B cell (primary cell): ENCODE measurements at regions of chr14 and their contacts with region 1.

Region 1: DNA sequence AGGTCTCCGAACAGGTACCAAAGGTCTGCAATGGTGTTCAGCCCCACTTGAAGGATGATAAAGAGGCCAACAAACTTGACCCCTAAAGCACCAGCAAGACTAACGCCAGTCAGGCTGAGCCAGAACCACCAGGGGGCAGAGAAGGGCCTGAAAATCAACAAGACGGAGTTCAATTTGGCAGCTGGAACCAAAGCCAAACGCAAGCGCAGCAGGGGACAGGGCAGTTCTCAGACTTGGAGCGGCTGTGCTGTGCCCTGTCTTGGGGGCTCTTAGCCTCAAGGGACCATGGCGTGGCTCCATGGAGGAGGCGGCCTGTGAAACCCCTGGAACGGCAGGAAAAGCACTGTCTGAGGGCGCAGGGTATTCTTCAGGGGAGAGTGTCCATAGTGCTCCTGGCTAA is 19.6 kb downstream of the POMT2 start:
- DNase-seq: peak; percentile 77
- ATAC-seq: peak; percentile 56
- H3K4me3 ChIP-seq: no peak overlapping the region
- H3K4me3 Mint-ChIP-seq: no peak overlapping the region
- H3K27ac ChIP-seq: no peak overlapping the region
- H3K27ac Mint-ChIP-seq: no peak overlapping the region
- H3K4me1 ChIP-seq: no peaks in the 10 kb centered on the region
- H3K4me1 Mint-ChIP-seq: peaks cover 2% of the 10 kb centered on the region
- H3K27me3 ChIP-seq: no peaks in the 10 kb centered on the region
- H3K27me3 Mint-ChIP-seq: no peaks in the 10 kb centered on the region
- CTCF ChIP-seq: peak; percentile 74

Region 2: DNA sequence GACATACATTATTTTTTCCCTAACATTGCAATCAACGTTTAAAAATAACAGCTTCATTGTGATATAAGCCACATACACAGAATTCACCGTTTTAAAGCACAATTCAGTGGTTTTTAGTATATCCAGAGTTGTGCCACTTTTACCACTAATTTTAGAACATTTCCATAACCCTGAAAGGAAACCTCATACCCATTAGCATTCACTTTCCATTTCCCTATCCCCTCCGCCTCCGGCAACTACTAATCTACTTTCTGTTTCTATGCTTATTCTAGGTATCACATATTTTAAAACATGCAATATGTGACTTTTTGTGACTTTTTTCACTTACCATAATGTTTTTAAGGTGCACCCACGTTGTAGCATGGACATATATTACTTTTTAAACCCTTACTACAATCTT is 253.1 kb after region 1 on chr14:
- CTCF ChIA-PET with region 1: interaction called, 56 read pairs
- POLR2A ChIA-PET with region 1: no interaction called
- intact Hi-C with region 1: loop called (anchors 1 kb)
- DNase-seq: peak; percentile 37
- ATAC-seq: no peak
- H3K4me3 ChIP-seq: no peak overlapping the region
- H3K4me3 Mint-ChIP-seq: no peak overlapping the region
- H3K27ac ChIP-seq: peak overlapping the region; percentile 46 to 73
- H3K27ac Mint-ChIP-seq: no peak overlapping the region
- H3K4me1 ChIP-seq: peaks cover 19 to 36% of the 10 kb centered on the region in 2 donors
- H3K4me1 Mint-ChIP-seq: peaks cover 3% of the 10 kb centered on the region
- H3K27me3 ChIP-seq: no peaks in the 10 kb centered on the region
- H3K27me3 Mint-ChIP-seq: no peaks in the 10 kb centered on the region
- CTCF ChIP-seq: no peak